ENCODE measurements at regions of chr16 and their contacts with region 1.

Region 1: DNA sequence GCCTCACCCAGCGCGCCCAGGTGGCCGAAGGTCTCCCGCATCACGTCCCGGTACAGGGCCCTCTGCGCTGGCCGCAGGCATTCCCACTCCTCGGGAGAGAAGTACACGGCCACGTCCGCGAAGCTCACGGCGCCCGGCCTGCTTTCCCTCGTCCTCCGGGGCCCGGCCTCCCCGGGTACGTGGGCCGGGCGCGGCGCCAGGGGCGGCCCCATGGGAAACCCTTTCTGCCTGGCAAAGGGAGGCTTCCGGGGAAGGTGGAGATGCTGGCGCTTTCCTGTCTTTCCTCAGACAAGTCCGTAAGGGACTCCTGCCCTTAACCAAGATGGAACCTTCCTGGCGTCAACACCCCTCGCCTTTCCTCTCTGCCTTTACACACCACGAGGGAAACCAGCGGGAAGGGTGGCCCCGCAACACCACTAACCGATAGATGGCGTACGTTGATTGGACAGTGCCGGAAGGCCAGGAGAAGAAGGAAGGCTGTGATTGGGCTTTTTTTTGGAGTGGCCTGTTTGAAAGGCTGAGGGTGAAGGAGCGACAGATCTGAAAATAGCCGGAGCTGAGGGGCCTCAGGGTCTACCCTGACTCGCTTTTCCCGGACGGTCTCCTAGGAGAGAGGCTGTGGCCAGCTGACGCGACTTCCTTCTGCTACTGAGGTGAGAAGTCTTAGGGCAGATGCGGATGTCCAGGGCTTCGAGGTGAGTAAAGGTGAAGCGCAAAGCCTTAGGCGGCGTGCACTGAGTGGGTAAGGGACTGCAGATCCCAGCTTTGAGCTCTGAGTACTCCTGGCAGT is at the start of gene ZNF785:
- DNase-seq: peak; percentile 94 to 98 (median 98)
- ATAC-seq: peak; percentile 98 to 100 (median 99)
- H3K4me3 ChIP-seq: peak within 1 kb of the TSS; percentile 54 to 93 (median 74)
- H3K27ac ChIP-seq: peak within 1 kb of the TSS; percentile 83 to 97 (median 88)
- H3K4me1 ChIP-seq: peaks cover 0 to 25% (median 10%) of the 10 kb centered on the region in 12 donors
- H3K27me3 ChIP-seq: no peaks in the 10 kb centered on the region
- CTCF ChIP-seq: peak in 11 of 12 donors; percentile 10 to 57 (median 33)
- POLR2A ChIP-seq: peak in 1 of 2 donors; percentile 54
- total RNA-seq, gene ZNF785: 2.9 to 10.9 (median 4.8) TPM

Region 2: DNA sequence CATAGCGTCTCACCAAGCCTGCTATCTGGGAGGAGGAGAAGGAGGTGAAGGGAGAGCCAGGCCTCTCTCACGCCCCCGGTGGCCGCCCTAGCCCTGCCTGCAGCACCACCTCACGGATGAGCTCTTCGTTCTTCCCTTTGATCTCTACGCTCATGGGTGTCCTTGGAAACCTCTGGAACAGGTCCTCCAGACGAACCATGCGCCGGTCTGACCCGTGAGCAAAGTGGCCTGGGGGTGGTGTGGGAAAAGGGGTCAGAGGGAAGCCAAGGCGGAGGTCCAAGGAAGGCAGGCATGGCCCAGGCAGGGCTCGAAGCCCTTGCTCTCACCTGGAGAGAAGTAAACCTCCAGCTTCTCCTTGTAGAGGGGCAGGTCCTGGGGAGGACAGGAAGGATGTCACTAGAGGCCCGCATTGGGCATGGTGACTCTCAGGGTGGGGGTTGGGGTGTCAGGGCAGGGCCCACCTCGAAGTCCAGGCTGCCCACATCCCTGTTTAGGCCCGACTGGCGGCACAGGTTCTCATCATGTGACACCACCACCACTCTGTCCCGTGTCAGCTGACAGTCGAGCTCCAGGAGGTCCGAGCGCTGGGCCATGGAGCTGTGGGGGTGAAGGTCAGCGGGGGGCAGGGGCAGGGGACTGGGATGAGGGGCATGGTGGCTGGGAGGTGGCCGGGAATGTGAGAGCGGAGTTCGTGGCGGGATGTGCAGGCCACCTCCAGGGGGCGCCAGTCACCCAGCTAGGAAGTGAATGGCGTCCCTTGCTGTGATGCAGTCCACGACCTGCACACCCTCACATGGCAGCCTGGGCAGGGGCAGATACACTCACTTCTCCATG is 473.2 kb before region 1 on chr16:
- intact Hi-C with region 1: no loop called
- DNase-seq: peak; percentile 35 to 84 (median 53)
- ATAC-seq: peak in 3 of 4 donors; percentile 50 to 59 (median 56)
- H3K4me3 ChIP-seq: no peak overlapping the region
- H3K27ac ChIP-seq: no peak overlapping the region
- H3K4me1 ChIP-seq: peaks cover 0 to 5% (median 0%) of the 10 kb centered on the region in 12 donors
- H3K27me3 ChIP-seq: no peaks in the 10 kb centered on the region
- CTCF ChIP-seq: peak; percentile 9 to 68 (median 56)
- POLR2A ChIP-seq: no peak

Region 3: DNA sequence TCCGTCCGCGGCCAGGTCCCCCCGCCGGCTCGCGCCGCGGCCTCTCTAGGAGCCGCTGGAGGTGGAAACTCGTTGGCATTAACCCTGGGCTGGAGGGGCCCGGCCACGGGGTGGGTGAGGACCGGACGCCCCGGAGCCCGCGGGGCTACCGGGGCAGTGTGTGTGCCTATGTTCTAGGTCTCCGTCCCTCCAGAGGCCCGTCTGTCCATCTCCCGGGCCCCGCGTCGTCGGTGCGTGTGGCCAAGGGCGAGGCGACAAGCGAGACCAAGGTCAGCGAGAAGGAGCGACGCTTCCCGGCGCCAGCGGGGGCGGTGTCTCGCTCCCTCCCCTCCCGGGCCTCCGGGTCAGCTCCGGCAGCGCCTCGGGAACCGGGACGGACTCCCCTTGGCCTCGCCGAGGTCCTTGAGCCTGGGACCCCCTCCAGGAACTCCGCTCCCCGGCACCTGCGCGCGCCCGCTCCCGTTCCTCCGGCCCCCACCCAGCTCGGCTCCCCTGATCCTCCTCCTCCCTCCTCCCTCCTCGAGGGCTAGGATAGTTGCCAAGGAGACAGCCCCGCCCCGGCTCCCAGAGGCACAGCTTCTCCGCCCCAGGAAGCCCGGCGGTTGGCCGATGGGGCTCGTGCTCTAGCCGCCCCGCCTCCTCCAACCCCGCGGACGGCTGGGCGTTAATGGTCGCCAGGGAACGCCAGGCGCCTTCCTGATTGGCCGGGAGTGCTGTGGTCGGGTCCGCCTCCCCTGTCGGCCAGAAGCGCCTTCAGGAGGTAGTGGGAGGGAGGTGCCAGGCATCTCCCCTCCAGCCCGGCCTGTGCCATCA is 58.6 kb before region 1 on chr16:
- intact Hi-C with region 1: loop called in 3 of 10 experiments (anchors 2 to 5 kb)
- DNase-seq: peak; percentile 99 to 100 (median 99)
- ATAC-seq: peak; percentile 93 to 97 (median 94)
- H3K4me3 ChIP-seq: peak overlapping the region; percentile 35 to 98 (median 86)
- H3K27ac ChIP-seq: peak overlapping the region; percentile 95 to 100 (median 99)
- H3K4me1 ChIP-seq: peaks cover 0 to 44% (median 19%) of the 10 kb centered on the region in 12 donors
- H3K27me3 ChIP-seq: no peaks in the 10 kb centered on the region
- CTCF ChIP-seq: peak in 10 of 12 donors; percentile 5 to 53 (median 28)
- POLR2A ChIP-seq: peak; percentile 38 to 86

Region 4: DNA sequence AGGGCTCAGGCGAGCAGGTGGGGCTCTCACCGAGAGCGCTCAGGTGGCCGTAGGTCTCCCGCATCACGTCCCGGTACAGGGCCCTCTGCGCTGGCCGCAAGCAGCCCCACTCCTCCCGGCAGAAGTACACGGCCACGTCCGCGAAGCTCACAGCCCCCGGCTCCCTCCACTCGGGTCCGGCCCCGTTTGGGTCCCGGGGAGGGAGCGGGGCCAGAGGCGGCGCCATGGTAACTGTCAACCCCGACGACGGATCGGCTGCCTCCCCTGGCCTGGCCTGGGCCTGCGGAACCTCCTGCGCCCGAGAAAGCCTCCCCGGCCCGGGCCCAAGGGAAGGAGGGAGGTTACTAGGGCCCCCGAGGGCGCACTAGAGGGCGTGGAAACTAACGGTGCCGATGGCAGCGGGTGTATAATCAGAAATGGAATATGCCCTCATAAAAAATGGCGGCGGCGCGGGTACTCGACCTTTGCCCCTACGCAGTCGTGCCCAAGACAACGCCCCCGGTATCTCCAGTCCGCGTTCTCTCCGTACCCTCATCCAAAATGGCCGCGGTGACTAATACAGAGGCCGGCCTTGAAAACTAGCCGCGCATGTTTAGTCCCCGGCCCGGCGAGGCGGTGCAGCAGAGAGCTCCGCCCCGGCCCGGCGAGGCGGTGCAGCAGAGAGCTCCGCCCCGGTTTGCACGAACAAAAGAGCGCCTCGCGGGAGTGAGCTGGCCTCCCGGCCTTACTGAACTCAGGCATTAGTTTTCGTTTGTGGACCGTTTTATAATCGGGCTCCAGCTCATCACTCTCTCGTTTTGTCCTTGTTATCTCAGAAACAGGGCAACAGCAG is 27.4 kb before region 1 on chr16 and contains the start of gene ZNF764:
- intact Hi-C with region 1: loop called in 1 of 10 experiments (anchors 1 kb)
- DNase-seq: peak; percentile 98 to 99 (median 98)
- ATAC-seq: peak; percentile 96 to 98 (median 98)
- H3K4me3 ChIP-seq: peak within 1 kb of the TSS; percentile 63 to 98 (median 77)
- H3K27ac ChIP-seq: peak within 1 kb of the TSS; percentile 86 to 99 (median 94)
- H3K4me1 ChIP-seq: peaks cover 0 to 67% (median 31%) of the 10 kb centered on the region in 12 donors
- H3K27me3 ChIP-seq: no peaks in the 10 kb centered on the region
- CTCF ChIP-seq: peak in 2 of 12 donors; percentile 6 to 20
- POLR2A ChIP-seq: peak in 1 of 2 donors; percentile 58
- total RNA-seq, gene ZNF764: 8.5 to 17.2 (median 12.3) TPM

Region 5: DNA sequence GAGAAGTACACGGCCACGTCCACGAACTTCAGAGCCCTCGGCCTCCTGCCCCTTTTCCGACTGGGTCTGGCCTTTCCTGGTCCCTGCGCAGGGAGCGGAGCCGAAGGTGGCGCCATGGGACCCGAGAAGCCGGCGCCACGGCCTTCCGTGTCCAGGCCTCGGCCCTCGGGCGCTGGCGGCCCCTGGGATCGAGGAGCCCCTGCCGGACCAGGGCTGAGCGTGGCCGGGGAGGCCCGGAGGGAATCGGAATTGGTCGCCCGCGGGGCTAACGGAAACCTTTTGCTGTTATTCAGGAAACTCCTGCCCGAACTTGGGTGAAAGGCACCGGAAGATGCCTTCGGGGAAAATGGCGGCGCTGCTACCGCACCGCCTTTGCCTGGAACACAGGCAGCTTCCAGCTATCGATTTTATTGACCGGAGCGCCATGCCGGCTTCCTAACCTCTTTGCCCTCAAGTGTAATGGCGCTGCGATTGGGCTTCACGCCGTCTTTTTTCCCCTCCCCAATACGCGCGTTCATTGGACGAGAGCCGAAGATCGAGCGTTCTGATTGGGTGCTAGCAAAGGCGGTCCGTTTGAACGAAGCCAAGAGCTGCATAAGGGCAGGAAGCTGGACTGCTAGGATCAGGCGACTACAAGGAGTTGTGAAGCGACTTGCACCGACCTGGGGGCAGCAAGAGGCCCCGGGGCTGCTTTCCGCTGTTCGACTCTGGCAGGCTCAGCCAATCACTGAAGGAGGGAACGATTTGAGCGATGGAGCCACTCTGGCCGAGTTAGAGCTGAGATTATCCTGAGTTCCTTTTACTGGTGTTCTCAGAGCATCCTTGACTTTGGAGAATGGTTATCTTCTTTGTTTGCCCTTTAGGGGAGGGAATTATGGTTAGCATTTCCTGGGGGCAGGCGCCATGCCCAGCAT is 24.6 kb after region 1 on chr16 and contains the start of gene ZNF689:
- intact Hi-C with region 1: loop called in 1 of 10 experiments (anchors 2 kb)
- DNase-seq: peak; percentile 93 to 95 (median 94)
- ATAC-seq: peak; percentile 95 to 99 (median 97)
- H3K4me3 ChIP-seq: peak within 1 kb of the TSS; percentile 64 to 99 (median 88)
- H3K27ac ChIP-seq: peak within 1 kb of the TSS; percentile 84 to 99 (median 97)
- H3K4me1 ChIP-seq: peaks cover 0 to 47% (median 10%) of the 10 kb centered on the region in 12 donors
- H3K27me3 ChIP-seq: no peaks in the 10 kb centered on the region
- CTCF ChIP-seq: peak in 1 of 12 donors; percentile 10
- POLR2A ChIP-seq: peak in 1 of 2 donors; percentile 50
- total RNA-seq, gene ZNF689: 4.0 to 7.9 (median 6.6) TPM

Region 6: DNA sequence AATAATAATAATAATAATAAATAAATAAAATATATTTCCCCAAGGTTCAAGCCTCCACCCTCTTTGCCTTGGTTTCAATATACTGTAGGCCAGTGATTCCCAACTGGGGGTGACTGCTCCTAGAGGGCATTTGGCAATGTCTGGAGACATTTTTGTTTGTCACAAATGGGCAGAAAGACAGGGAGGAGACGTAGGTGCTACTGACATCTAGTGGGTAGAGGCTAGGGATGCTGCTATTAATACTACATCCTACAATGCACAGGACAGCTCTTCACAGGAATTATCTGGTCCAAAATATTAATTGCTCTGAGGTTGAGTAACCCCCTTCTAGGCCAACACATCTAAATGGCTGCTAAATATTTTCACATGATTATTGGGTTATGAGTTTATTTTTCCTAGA is 52.3 kb after region 1 on chr16:
- intact Hi-C with region 1: loop called in 2 of 10 experiments (anchors 5 to 10 kb)
- DNase-seq: no peak
- ATAC-seq: no peak
- H3K4me3 ChIP-seq: no peak overlapping the region
- H3K27ac ChIP-seq: no peak overlapping the region
- H3K4me1 ChIP-seq: peaks cover 0 to 19% (median 9%) of the 10 kb centered on the region in 12 donors
- H3K27me3 ChIP-seq: no peaks in the 10 kb centered on the region
- CTCF ChIP-seq: peak in 5 of 12 donors; percentile 17 to 32 (median 28)
- POLR2A ChIP-seq: no peak

Region 7: GRCh38 chr16:30657866-30658730 is 72.5 kb after region 1 on chr16 and contains the start of gene FBRS:
- intact Hi-C with region 1: loop called in 2 of 10 experiments (anchors 5 to 10 kb)
- DNase-seq: peak; percentile 100
- ATAC-seq: peak; percentile 87 to 94 (median 92)
- H3K4me3 ChIP-seq: peak within 1 kb of the TSS; percentile 68 to 96 (median 90)
- H3K27ac ChIP-seq: peak within 1 kb of the TSS; percentile 96 to 100 (median 98)
- H3K4me1 ChIP-seq: peaks cover 0 to 47% (median 39%) of the 10 kb centered on the region in 12 donors
- H3K27me3 ChIP-seq: no peaks in the 10 kb centered on the region
- CTCF ChIP-seq: peak; percentile 74 to 99 (median 90)
- POLR2A ChIP-seq: peak in 1 of 2 donors; percentile 70
- total RNA-seq, gene FBRS: 16.3 to 38.3 (median 31.9) TPM

Region 8: GRCh38 chr16:30710971-30711370 is 125.4 kb after region 1 on chr16:
- intact Hi-C with region 1: no loop called
- DNase-seq: peak in 1 of 5 donors; percentile 4
- ATAC-seq: no peak
- H3K4me3 ChIP-seq: no peak overlapping the region
- H3K27ac ChIP-seq: no peak overlapping the region
- H3K4me1 ChIP-seq: peaks cover 0 to 23% (median 0%) of the 10 kb centered on the region in 12 donors
- H3K27me3 ChIP-seq: no peaks in the 10 kb centered on the region
- CTCF ChIP-seq: no peak
- POLR2A ChIP-seq: no peak